AG04450 (cell line): ENCODE measurements at regions of chr11 and their contacts with region 1.

Region 1: GRCh38 chr11:111759778-111760407 is 6.3 kb downstream of the PPP2R1B start:
- DNase-seq: no peak
- H3K4me3 ChIP-seq: no peak overlapping the region
- H3K27ac ChIP-seq: no peak overlapping the region
- H3K27me3 ChIP-seq: no peaks in the 10 kb centered on the region
- CTCF ChIP-seq: no peak

Region 2: GRCh38 chr11:111635706-111636045 is 124.2 kb before region 1 on chr11:
- CTCF ChIA-PET with region 1: no interaction called
- POLR2A ChIA-PET with region 1: no interaction called
- DNase-seq: peak; percentile 29
- H3K4me3 ChIP-seq: no peak overlapping the region; the same call in 1 of the 2 replicates
- H3K27ac ChIP-seq: peak overlapping the region; percentile 53
- H3K27me3 ChIP-seq: no peaks in the 10 kb centered on the region
- CTCF ChIP-seq: no peak

Region 3: GRCh38 chr11:111718436-111718835 is 41.5 kb before region 1 on chr11:
- CTCF ChIA-PET with region 1: no interaction called
- POLR2A ChIA-PET with region 1: interaction called, 11 read pairs
- DNase-seq: no peak
- H3K4me3 ChIP-seq: no peak overlapping the region
- H3K27ac ChIP-seq: peak overlapping the region; percentile 62
- H3K27me3 ChIP-seq: no peaks in the 10 kb centered on the region
- CTCF ChIP-seq: no peak

Region 4: DNA sequence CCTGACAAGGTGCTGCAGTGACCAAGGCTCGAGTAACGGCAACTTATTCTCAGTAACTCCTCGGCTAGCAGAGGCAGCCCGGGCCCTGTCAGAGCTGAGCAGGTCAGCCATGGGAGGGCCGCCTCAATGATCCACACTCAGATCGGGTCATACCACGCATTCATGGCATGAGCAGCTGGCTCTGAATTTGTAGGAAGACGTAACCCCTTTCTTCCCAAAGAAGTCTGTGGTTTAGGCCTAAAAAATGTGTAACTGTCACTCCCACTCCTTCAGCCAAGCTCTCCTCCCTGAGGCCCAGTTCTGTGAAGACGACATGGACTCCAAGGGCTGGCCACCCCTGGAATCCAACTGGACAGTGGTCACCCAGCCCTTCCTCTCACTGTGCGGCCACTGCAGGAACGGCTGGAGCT is 23.7 kb before region 1 on chr11:
- CTCF ChIA-PET with region 1: no interaction called
- POLR2A ChIA-PET with region 1: no interaction called
- DNase-seq: peak; percentile 57
- H3K4me3 ChIP-seq: no peak overlapping the region
- H3K27ac ChIP-seq: peak overlapping the region; percentile 100
- H3K27me3 ChIP-seq: no peaks in the 10 kb centered on the region
- CTCF ChIP-seq: no peak